ENCODE measurements at regions of chr6 and their contacts with region 1.

Region 1: DNA sequence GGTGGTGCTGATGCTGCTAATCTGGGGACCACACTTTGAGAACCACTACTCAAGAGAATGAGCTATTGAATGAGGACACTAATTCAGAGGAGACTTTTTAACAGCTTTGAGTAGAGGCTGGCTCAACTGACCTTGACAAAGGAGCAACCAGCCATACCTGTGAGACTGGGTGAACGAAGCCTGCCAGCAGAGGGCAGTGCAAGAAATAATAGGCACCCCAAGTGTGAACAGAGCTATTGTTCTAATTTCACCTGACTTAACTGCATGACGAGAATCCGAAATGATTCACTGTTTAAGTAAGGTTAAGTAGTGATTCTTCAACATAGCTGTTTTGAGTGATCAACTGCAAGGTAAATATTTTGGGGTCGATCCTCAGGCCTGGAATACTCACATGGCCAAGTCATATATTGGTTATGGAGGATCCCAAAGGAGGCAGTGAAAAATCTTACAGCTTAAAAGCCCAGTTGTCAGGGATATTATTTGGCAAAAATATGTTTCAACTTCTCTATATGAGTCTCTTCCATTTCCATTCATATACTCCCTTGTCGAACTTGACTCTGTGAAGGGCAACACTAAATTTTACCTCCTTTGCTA is 550.5 kb upstream of the MARCKS start:
- DNase-seq: peak; percentile 16 to 40
- ATAC-seq: peak in 1 of 2 donors; percentile 90
- H3K4me3 ChIP-seq: no peak overlapping the region
- H3K27ac ChIP-seq: no peak overlapping the region
- H3K4me1 ChIP-seq: no peaks in the 10 kb centered on the region
- H3K27me3 ChIP-seq: no peaks in the 10 kb centered on the region
- CTCF ChIP-seq: peak in 4 of 5 experiments; percentile 60 to 71 (median 64)
- POLR2A ChIP-seq: no peak

Region 2: GRCh38 chr6:113281014-113281413 is 25.6 kb before region 1 on chr6:
- in situ Hi-C with region 1: no loop called
- intact Hi-C with region 1: no loop called
- DNase-seq: no peak
- ATAC-seq: no peak
- H3K4me3 ChIP-seq: no peak overlapping the region
- H3K27ac ChIP-seq: no peak overlapping the region
- H3K4me1 ChIP-seq: no peaks in the 10 kb centered on the region
- H3K27me3 ChIP-seq: no peaks in the 10 kb centered on the region
- CTCF ChIP-seq: no peak
- POLR2A ChIP-seq: no peak

Region 3: GRCh38 chr6:113879186-113880096 is 572.8 kb after region 1 on chr6:
- in situ Hi-C with region 1: loop called in 2 of 4 experiments (anchors 10 to 25 kb)
- intact Hi-C with region 1: loop called (anchors 2 kb)
- DNase-seq: peak; percentile 32 to 37
- ATAC-seq: peak; percentile 99 to 100
- H3K4me3 ChIP-seq: peak overlapping the region in 1 of 4 donors; percentile 30
- H3K27ac ChIP-seq: peak overlapping the region in 2 of 4 donors; percentile 8 to 29
- H3K4me1 ChIP-seq: peaks cover 0 to 6% of the 10 kb centered on the region in 2 donors
- H3K27me3 ChIP-seq: no peaks in the 10 kb centered on the region
- CTCF ChIP-seq: peak; percentile 33 to 76 (median 59)
- POLR2A ChIP-seq: no peak